ENCODE measurements at regions of chr6 and their contacts with region 1.

Region 1: DNA sequence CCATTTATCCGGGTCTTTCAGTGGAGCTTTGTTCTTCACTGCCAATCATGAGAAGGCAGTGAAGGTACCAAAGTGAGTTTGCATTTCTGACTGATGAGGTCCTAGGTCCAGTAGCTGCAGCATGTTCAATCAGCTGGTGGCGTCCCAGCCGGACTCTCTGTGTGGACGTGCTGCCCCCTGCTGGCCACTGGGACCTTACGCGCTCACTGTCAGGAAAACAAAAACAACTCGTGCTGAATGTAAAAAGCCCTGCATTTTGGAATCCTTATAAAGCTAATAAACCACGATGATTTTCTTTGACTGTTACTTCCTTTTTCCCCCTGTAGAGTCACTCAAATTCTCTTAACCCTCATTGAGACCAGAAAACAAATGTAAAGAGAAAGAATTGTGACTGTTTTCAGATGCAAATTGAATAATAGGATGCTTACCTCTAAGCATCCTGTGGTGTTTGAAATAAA is 4.9 kb upstream of the CD24 start:
- DNase-seq: peak; percentile 84
- ATAC-seq: peak; percentile 35
- H3K4me3 ChIP-seq: no peak overlapping the region
- H3K27ac ChIP-seq: no peak overlapping the region
- H3K4me1 ChIP-seq: peaks cover 11% of the 10 kb centered on the region
- H3K27me3 ChIP-seq: no peaks in the 10 kb centered on the region
- CTCF ChIP-seq: peak; percentile 88

Region 2: DNA sequence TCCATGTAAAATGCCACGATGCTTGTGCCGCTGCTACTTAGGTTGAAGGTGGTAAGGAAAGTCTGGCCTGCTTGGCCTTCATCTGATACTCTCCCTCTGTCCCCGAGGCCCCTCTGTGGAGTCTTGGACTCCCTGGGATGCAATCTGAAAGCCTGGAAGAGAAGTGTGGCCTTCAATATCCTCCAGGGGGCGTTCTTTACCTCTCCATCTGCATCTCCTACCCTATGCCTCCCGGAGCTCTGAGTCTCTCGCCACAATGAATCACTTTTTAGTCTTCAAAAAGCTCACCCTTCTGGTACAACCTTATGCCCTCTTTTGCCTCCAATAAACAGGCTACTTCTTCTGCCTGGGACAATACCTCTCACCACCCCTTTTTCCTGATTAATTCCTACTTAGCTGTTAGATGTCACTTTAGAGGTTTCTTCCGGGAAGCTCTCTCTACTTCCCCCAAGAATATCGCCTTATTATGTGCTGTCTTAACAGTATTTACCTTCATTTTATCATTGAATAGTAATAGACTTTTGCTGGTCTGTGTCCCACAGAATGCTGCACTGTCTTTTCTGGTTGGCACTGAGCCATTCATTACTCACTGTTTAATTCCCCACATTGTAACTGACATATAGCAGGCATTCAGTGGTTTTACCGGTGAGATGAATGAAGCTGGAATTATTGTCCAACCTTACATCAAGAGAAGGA is 640.0 kb before region 1 on chr6:
- CTCF ChIA-PET with region 1: interaction called, 12 read pairs
- POLR2A ChIA-PET with region 1: no interaction called
- intact Hi-C with region 1: loop called (anchors 5 kb)
- DNase-seq: peak; percentile 82
- ATAC-seq: peak; percentile 91
- H3K4me3 ChIP-seq: peak overlapping the region; percentile 56
- H3K27ac ChIP-seq: peak overlapping the region; percentile 70
- H3K4me1 ChIP-seq: peaks cover 12% of the 10 kb centered on the region
- H3K27me3 ChIP-seq: no peaks in the 10 kb centered on the region
- CTCF ChIP-seq: peak; percentile 83

Region 3: GRCh38 chr6:106512048-106512967 is 467.1 kb before region 1 on chr6:
- CTCF ChIA-PET with region 1: no interaction called
- POLR2A ChIA-PET with region 1: no interaction called
- intact Hi-C with region 1: loop called (anchors 5 kb)
- DNase-seq: peak; percentile 58
- ATAC-seq: peak; percentile 33
- H3K4me3 ChIP-seq: peak overlapping the region; percentile 87
- H3K27ac ChIP-seq: peak overlapping the region; percentile 84
- H3K4me1 ChIP-seq: peaks cover 35% of the 10 kb centered on the region
- H3K27me3 ChIP-seq: no peaks in the 10 kb centered on the region
- CTCF ChIP-seq: peak; percentile 22; the same call in 1 of the 2 replicates

Region 4: GRCh38 chr6:106692112-106692818 is 287.2 kb before region 1 on chr6:
- CTCF ChIA-PET with region 1: interaction called, 3 read pairs
- POLR2A ChIA-PET with region 1: interaction called, 4 read pairs
- intact Hi-C with region 1: loop called (anchors 2 kb)
- DNase-seq: peak; percentile 53
- ATAC-seq: peak; percentile 86
- H3K4me3 ChIP-seq: no peak overlapping the region
- H3K27ac ChIP-seq: no peak overlapping the region
- H3K4me1 ChIP-seq: peaks cover 25% of the 10 kb centered on the region
- H3K27me3 ChIP-seq: no peaks in the 10 kb centered on the region
- CTCF ChIP-seq: no peak

Region 5: DNA sequence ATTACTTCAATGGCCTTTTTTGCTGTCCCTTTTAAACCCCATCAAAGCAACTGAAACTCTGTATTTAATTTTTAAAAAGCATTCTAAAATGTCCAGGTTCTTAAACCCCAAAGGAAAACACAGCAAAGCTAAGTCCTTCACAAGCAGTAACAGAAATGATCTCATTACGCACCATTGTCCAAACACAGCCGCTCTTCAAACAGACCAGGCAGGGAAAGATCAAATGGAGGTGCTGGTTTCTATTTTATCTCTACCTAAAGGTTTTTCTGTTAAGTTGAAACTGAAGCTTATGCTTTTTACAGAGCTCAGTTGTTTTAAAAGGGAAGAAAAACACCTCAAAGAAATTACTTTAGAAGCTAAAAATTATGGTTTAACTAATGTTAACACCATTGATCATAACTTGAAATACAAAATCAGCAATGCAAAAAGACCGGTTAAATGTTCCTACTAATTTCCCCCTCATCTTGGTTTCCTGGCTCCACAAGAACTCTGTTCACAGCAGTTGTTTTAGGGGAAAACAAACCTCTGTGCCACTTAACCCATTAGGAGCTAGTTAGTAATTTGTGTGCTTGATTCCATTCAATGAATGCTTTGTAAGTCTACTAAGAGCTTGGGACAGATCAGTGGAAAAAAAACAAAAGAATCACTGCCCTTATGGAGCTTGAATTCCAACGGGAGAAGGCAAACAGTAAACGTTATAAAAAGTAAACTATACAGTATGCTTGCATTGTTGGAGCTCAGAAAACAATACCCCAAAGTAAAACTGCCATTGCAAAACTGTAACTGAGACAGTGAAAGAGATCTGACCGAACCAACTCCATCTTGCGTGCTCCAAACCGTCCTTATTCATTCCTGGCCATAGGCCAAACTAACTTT is 92.3 kb before region 1 on chr6:
- CTCF ChIA-PET with region 1: no interaction called
- POLR2A ChIA-PET with region 1: no interaction called
- intact Hi-C with region 1: loop called (anchors 5 kb)
- DNase-seq: peak; percentile 35
- ATAC-seq: peak; percentile 61
- H3K4me3 ChIP-seq: peak overlapping the region; percentile 30; the same call in 1 of the 2 replicates
- H3K27ac ChIP-seq: peak overlapping the region; percentile 63
- H3K4me1 ChIP-seq: peaks cover 45% of the 10 kb centered on the region
- H3K27me3 ChIP-seq: no peaks in the 10 kb centered on the region
- CTCF ChIP-seq: no peak

Measured in PC-3 (cell line).